CD8-positive, alpha-beta T cell (primary cell): ENCODE measurements at regions of chr4 and their contacts with region 1.

Region 1: GRCh38 chr4:186936496-186937375 is 213.1 kb upstream of the FAT1 start:
- DNase-seq: no peak
- ATAC-seq: no peak
- H3K4me3 ChIP-seq: no peak overlapping the region
- H3K4me3 Mint-ChIP-seq: no peak overlapping the region
- H3K27ac ChIP-seq: no peak overlapping the region
- H3K27ac Mint-ChIP-seq: no peak overlapping the region
- H3K4me1 ChIP-seq: no peaks in the 10 kb centered on the region
- H3K4me1 Mint-ChIP-seq: no peaks in the 10 kb centered on the region
- H3K27me3 ChIP-seq: no peaks in the 10 kb centered on the region
- H3K27me3 Mint-ChIP-seq: no peaks in the 10 kb centered on the region
- CTCF ChIP-seq: no peak

Region 2: GRCh38 chr4:186587416-186588018 is 349.2 kb before region 1 on chr4:
- CTCF ChIA-PET with region 1: no interaction called
- POLR2A ChIA-PET with region 1: no interaction called
- intact Hi-C with region 1: no loop called
- DNase-seq: peak; percentile 3 to 66 (median 57)
- ATAC-seq: no peak
- H3K4me3 ChIP-seq: no peak overlapping the region
- H3K4me3 Mint-ChIP-seq: no peak overlapping the region
- H3K27ac ChIP-seq: no peak overlapping the region
- H3K27ac Mint-ChIP-seq: no peak overlapping the region
- H3K4me1 ChIP-seq: no peaks in the 10 kb centered on the region
- H3K4me1 Mint-ChIP-seq: no peaks in the 10 kb centered on the region
- H3K27me3 ChIP-seq: no peaks in the 10 kb centered on the region
- H3K27me3 Mint-ChIP-seq: no peaks in the 10 kb centered on the region
- CTCF ChIP-seq: peak; percentile 91

Region 3: GRCh38 chr4:186685767-186686183 is 251.0 kb before region 1 on chr4:
- CTCF ChIA-PET with region 1: no interaction called
- POLR2A ChIA-PET with region 1: no interaction called
- intact Hi-C with region 1: no loop called
- DNase-seq: no peak
- ATAC-seq: no peak
- H3K4me3 ChIP-seq: no peak overlapping the region
- H3K4me3 Mint-ChIP-seq: no peak overlapping the region
- H3K27ac ChIP-seq: no peak overlapping the region
- H3K27ac Mint-ChIP-seq: no peak overlapping the region
- H3K4me1 ChIP-seq: no peaks in the 10 kb centered on the region
- H3K4me1 Mint-ChIP-seq: no peaks in the 10 kb centered on the region
- H3K27me3 ChIP-seq: no peaks in the 10 kb centered on the region
- H3K27me3 Mint-ChIP-seq: no peaks in the 10 kb centered on the region
- CTCF ChIP-seq: no peak

Region 4: DNA sequence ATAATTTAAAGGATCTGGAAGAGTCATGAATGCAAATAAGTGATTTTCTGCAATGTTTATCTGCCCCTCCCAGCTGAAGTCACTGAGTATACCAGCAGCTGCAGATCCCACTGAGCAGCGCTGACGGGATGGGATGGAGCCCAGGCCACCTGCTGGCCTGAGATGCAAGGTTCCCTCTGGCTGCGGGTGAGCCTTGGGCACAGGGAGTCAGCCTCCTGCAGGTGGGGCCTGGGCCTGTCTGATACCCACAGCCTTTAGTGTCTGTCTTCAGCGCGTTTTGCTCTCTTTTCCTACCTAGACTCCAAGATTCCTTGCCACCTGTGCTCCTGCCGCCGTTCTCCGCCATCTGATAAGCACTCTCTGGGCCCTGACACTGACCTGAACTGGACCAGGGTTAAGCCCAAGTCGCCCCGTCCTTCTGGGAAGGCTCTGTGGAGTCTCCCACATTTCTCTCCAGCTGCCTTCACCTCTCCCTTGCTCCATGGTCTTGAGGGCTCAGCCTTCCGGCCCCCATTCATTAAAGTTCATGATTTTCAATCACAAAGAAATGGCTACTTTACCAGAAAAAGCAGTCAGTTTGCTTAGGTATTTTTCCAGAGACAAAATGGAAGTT is 10.1 kb after region 1 on chr4:
- CTCF ChIA-PET with region 1: no interaction called
- POLR2A ChIA-PET with region 1: no interaction called
- intact Hi-C with region 1: no loop called
- DNase-seq: no peak
- ATAC-seq: no peak
- H3K4me3 ChIP-seq: no peak overlapping the region
- H3K4me3 Mint-ChIP-seq: no peak overlapping the region
- H3K27ac ChIP-seq: no peak overlapping the region
- H3K27ac Mint-ChIP-seq: no peak overlapping the region
- H3K4me1 ChIP-seq: no peaks in the 10 kb centered on the region
- H3K4me1 Mint-ChIP-seq: no peaks in the 10 kb centered on the region
- H3K27me3 ChIP-seq: no peaks in the 10 kb centered on the region
- H3K27me3 Mint-ChIP-seq: no peaks in the 10 kb centered on the region
- CTCF ChIP-seq: no peak

Region 5: DNA sequence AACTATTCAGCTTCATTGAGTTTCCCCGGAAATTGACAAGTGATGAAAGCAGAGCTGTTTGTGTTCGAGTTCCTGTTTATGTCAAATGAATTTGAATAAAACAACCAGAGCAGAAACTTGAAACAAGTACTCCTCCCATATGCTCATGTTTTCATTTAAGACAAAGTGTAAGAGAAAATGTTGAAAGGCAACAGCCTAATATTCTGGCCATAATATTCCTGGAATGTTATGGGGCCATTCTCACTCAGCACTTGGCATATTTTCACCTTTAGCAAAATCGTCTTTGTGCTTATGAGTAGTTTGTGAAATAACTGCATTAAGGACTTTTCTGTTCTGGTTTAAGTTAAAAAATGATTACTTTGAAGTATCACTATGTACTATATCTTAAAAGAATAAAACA is 63.0 kb after region 1 on chr4:
- CTCF ChIA-PET with region 1: no interaction called
- POLR2A ChIA-PET with region 1: no interaction called
- intact Hi-C with region 1: loop called in 1 of 2 experiments (anchors 10 kb)
- DNase-seq: no peak
- ATAC-seq: no peak
- H3K4me3 ChIP-seq: no peak overlapping the region
- H3K4me3 Mint-ChIP-seq: no peak overlapping the region
- H3K27ac ChIP-seq: no peak overlapping the region
- H3K27ac Mint-ChIP-seq: no peak overlapping the region
- H3K4me1 ChIP-seq: no peaks in the 10 kb centered on the region
- H3K4me1 Mint-ChIP-seq: no peaks in the 10 kb centered on the region
- H3K27me3 ChIP-seq: no peaks in the 10 kb centered on the region
- H3K27me3 Mint-ChIP-seq: no peaks in the 10 kb centered on the region
- CTCF ChIP-seq: no peak

Region 6: GRCh38 chr4:187889651-187890050 is 952.9 kb after region 1 on chr4:
- CTCF ChIA-PET with region 1: no interaction called
- POLR2A ChIA-PET with region 1: no interaction called
- intact Hi-C with region 1: no loop called
- DNase-seq: no peak
- ATAC-seq: no peak
- H3K4me3 ChIP-seq: no peak overlapping the region
- H3K4me3 Mint-ChIP-seq: no peak overlapping the region
- H3K27ac ChIP-seq: no peak overlapping the region
- H3K27ac Mint-ChIP-seq: no peak overlapping the region
- H3K4me1 ChIP-seq: no peaks in the 10 kb centered on the region
- H3K4me1 Mint-ChIP-seq: no peaks in the 10 kb centered on the region
- H3K27me3 ChIP-seq: no peaks in the 10 kb centered on the region
- H3K27me3 Mint-ChIP-seq: no peaks in the 10 kb centered on the region
- CTCF ChIP-seq: no peak